CD4-positive, alpha-beta memory T cell (primary cell): ENCODE measurements at regions of chr1 and their contacts with region 1.

Region 1: GRCh38 chr1:193479187-193479586 is 292.8 kb upstream of the B3GALT2 start:
- DNase-seq: peak; percentile 89 to 95 (median 93)
- H3K4me3 ChIP-seq: no peak overlapping the region
- H3K4me3 Mint-ChIP-seq: peak overlapping the region in 7 of 8 donors; percentile 37 to 79 (median 65)
- H3K27ac ChIP-seq: peak overlapping the region; percentile 68
- H3K27ac Mint-ChIP-seq: peak overlapping the region; percentile 86 to 98 (median 96)
- H3K4me1 ChIP-seq: peaks cover 70% of the 10 kb centered on the region
- H3K4me1 Mint-ChIP-seq: peaks cover 42 to 75% (median 47%) of the 10 kb centered on the region in 4 donors
- H3K27me3 ChIP-seq: no peaks in the 10 kb centered on the region
- H3K27me3 Mint-ChIP-seq: no peaks in the 10 kb centered on the region

Region 2: GRCh38 chr1:192808518-192809306 is 670.5 kb before region 1 on chr1 and contains the start of gene RGS2:
- CTCF ChIA-PET with region 1: interaction called, 3 read pairs
- POLR2A ChIA-PET with region 1: no interaction called
- intact Hi-C with region 1: loop called (anchors 10 kb)
- DNase-seq: peak; percentile 86 to 89 (median 87)
- H3K4me3 ChIP-seq: peak within 1 kb of the TSS; percentile 89 to 97
- H3K4me3 Mint-ChIP-seq: peak within 1 kb of the TSS; percentile 92 to 99 (median 98)
- H3K27ac ChIP-seq: peak within 1 kb of the TSS; percentile 66
- H3K27ac Mint-ChIP-seq: peak within 1 kb of the TSS; percentile 94 to 99 (median 97)
- H3K4me1 ChIP-seq: peaks cover 36% of the 10 kb centered on the region
- H3K4me1 Mint-ChIP-seq: peaks cover 26 to 42% (median 32%) of the 10 kb centered on the region in 4 donors
- H3K27me3 ChIP-seq: no peaks in the 10 kb centered on the region
- H3K27me3 Mint-ChIP-seq: peaks cover 0 to 2% of the 10 kb centered on the region in 2 donors
- total RNA-seq, gene RGS2: 26.4 to 27.9 TPM

Region 3: GRCh38 chr1:192826791-192827477 is 652.3 kb before region 1 on chr1:
- CTCF ChIA-PET with region 1: no interaction called
- POLR2A ChIA-PET with region 1: no interaction called
- intact Hi-C with region 1: no loop called
- DNase-seq: no peak
- H3K4me3 ChIP-seq: no peak overlapping the region
- H3K4me3 Mint-ChIP-seq: no peak overlapping the region
- H3K27ac ChIP-seq: no peak overlapping the region
- H3K27ac Mint-ChIP-seq: no peak overlapping the region
- H3K4me1 ChIP-seq: no peaks in the 10 kb centered on the region
- H3K4me1 Mint-ChIP-seq: peaks cover 0 to 2% (median 0%) of the 10 kb centered on the region in 4 donors
- H3K27me3 ChIP-seq: no peaks in the 10 kb centered on the region
- H3K27me3 Mint-ChIP-seq: peaks cover 8 to 13% of the 10 kb centered on the region in 2 donors

Region 4: DNA sequence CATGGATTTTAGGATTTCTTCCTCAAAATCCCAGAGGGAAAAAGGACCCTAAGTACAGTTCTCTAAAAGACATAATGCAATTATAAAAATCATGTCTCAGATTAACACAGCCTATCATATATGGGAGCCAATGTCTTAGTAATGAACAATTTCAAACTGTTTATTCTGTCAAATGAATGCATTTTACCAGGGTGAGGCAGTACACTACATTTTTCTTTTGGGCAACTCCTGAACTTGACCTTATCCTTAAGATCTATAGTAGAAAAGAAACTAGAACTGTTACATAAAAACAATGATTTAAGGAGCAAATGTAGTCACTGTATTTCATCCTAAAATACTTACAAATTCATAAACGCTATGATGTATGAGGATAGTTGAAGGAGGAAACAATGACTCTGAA is 66.4 kb before region 1 on chr1:
- CTCF ChIA-PET with region 1: interaction called, 3 read pairs
- POLR2A ChIA-PET with region 1: interaction called, 14 read pairs
- intact Hi-C with region 1: no loop called
- DNase-seq: no peak
- H3K4me3 ChIP-seq: no peak overlapping the region
- H3K4me3 Mint-ChIP-seq: peak overlapping the region in 3 of 8 donors; percentile 33 to 91 (median 47)
- H3K27ac ChIP-seq: peak overlapping the region; percentile 38
- H3K27ac Mint-ChIP-seq: peak overlapping the region in 6 of 7 donors; percentile 60 to 97 (median 83)
- H3K4me1 ChIP-seq: peaks cover 40% of the 10 kb centered on the region
- H3K4me1 Mint-ChIP-seq: peaks cover 32 to 61% (median 45%) of the 10 kb centered on the region in 4 donors
- H3K27me3 ChIP-seq: no peaks in the 10 kb centered on the region
- H3K27me3 Mint-ChIP-seq: no peaks in the 10 kb centered on the region

Region 5: GRCh38 chr1:193456811-193457280 is 22.3 kb before region 1 on chr1:
- CTCF ChIA-PET with region 1: interaction called, 6 read pairs
- POLR2A ChIA-PET with region 1: interaction called, 411 read pairs
- intact Hi-C with region 1: loop called (anchors 1 kb)
- DNase-seq: peak in 1 of 5 donors; percentile 26
- H3K4me3 ChIP-seq: peak overlapping the region in 1 of 2 donors; percentile 28
- H3K4me3 Mint-ChIP-seq: no peak overlapping the region
- H3K27ac ChIP-seq: peak overlapping the region; percentile 67
- H3K27ac Mint-ChIP-seq: no peak overlapping the region
- H3K4me1 ChIP-seq: peaks cover 77% of the 10 kb centered on the region
- H3K4me1 Mint-ChIP-seq: peaks cover 21 to 33% (median 25%) of the 10 kb centered on the region in 4 donors
- H3K27me3 ChIP-seq: no peaks in the 10 kb centered on the region
- H3K27me3 Mint-ChIP-seq: no peaks in the 10 kb centered on the region

Region 6: GRCh38 chr1:193519922-193520321 is 40.7 kb after region 1 on chr1:
- CTCF ChIA-PET with region 1: no interaction called
- POLR2A ChIA-PET with region 1: interaction called, 3 read pairs
- intact Hi-C with region 1: loop called (anchors 5 kb)
- DNase-seq: no peak
- H3K4me3 ChIP-seq: no peak overlapping the region
- H3K4me3 Mint-ChIP-seq: no peak overlapping the region
- H3K27ac ChIP-seq: no peak overlapping the region
- H3K27ac Mint-ChIP-seq: peak overlapping the region in 1 of 7 donors; percentile 6
- H3K4me1 ChIP-seq: no peaks in the 10 kb centered on the region
- H3K4me1 Mint-ChIP-seq: peaks cover 7 to 12% (median 8%) of the 10 kb centered on the region in 4 donors
- H3K27me3 ChIP-seq: no peaks in the 10 kb centered on the region
- H3K27me3 Mint-ChIP-seq: no peaks in the 10 kb centered on the region

Region 7: GRCh38 chr1:194052514-194053333 is 573.5 kb after region 1 on chr1:
- CTCF ChIA-PET with region 1: no interaction called
- POLR2A ChIA-PET with region 1: interaction called, 11 read pairs
- intact Hi-C with region 1: no loop called
- DNase-seq: peak in 3 of 5 donors; percentile 13 to 34 (median 24)
- H3K4me3 ChIP-seq: no peak overlapping the region
- H3K4me3 Mint-ChIP-seq: peak overlapping the region; percentile 10 to 79 (median 65)
- H3K27ac ChIP-seq: peak overlapping the region; percentile 20
- H3K27ac Mint-ChIP-seq: peak overlapping the region; percentile 50 to 93 (median 90)
- H3K4me1 ChIP-seq: peaks cover 62% of the 10 kb centered on the region
- H3K4me1 Mint-ChIP-seq: peaks cover 55 to 59% (median 58%) of the 10 kb centered on the region in 4 donors
- H3K27me3 ChIP-seq: no peaks in the 10 kb centered on the region
- H3K27me3 Mint-ChIP-seq: no peaks in the 10 kb centered on the region